ENCODE measurements at regions of chr3 and their contacts with region 1.

Region 1: GRCh38 chr3:154398084-154398967 is 31.7 kb downstream of the GPR149 start:
- DNase-seq: no peak
- H3K4me3 ChIP-seq: no peak overlapping the region
- H3K27ac ChIP-seq: no peak overlapping the region
- H3K4me1 ChIP-seq: no peaks in the 10 kb centered on the region
- CTCF ChIP-seq: no peak

Region 2: DNA sequence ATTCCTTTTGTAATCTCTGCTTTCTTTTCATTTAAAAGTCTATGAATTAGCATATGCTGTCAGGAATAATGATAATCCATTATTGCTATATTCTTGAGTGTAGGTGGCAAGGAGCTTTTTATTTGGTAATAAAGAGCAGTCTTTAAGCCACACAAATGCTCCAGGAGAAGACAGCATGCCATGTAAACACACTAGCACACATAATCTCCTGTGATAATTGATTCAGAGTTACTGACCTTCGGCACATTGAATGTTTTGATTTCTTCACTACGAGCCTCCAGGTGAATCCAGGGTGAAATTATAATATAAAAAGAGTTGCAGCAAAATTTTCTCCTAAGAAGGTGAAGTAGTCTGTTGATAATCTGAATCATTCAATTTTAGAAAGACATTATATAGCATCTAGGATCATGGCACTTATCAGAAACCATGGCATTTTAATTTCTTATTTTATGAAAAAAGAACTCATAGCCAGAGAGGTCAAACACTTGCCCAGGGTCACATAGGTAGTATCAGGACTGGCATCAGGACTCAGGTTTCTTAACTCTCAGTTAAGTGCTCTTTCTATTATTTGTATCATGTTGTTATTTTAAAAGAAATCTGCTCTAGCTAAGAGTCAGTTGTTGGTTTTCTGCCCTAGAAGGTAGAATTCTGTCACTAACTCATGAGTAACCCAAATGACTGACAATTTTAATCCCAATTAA is 52.8 kb before region 1 on chr3:
- CTCF ChIA-PET with region 1: no interaction called
- POLR2A ChIA-PET with region 1: no interaction called
- intact Hi-C with region 1: loop called (anchors 10 kb)
- DNase-seq: no peak
- H3K4me3 ChIP-seq: no peak overlapping the region
- H3K27ac ChIP-seq: no peak overlapping the region
- H3K4me1 ChIP-seq: no peaks in the 10 kb centered on the region
- CTCF ChIP-seq: no peak

Measured in OCI-LY7 (cell line).